Activated CD4-positive, alpha-beta T cell treated with anti-CD3 and anti-CD28 coated beads, Interleukin-2, amount 10 ng/mL, durations not matched to agents 7 days and 5 days (primary cell): ENCODE measurements at regions of chr19 and their contacts with region 1.

Region 1: GRCh38 chr19:50341091-50341564 is 12.0 kb upstream of the KCNC3 start:
- DNase-seq: no peak
- H3K4me3 Mint-ChIP-seq: no peak overlapping the region
- H3K27ac Mint-ChIP-seq: no peak overlapping the region
- H3K4me1 Mint-ChIP-seq: peaks cover 12% of the 10 kb centered on the region
- H3K27me3 Mint-ChIP-seq: no peaks in the 10 kb centered on the region

Region 2: GRCh38 chr19:50252111-50252886 is 88.8 kb before region 1 on chr19:
- CTCF ChIA-PET with region 1: no interaction called
- POLR2A ChIA-PET with region 1: no interaction called
- DNase-seq: peak; percentile 23
- H3K4me3 Mint-ChIP-seq: no peak overlapping the region
- H3K27ac Mint-ChIP-seq: no peak overlapping the region
- H3K4me1 Mint-ChIP-seq: no peaks in the 10 kb centered on the region
- H3K27me3 Mint-ChIP-seq: no peaks in the 10 kb centered on the region

Region 3: DNA sequence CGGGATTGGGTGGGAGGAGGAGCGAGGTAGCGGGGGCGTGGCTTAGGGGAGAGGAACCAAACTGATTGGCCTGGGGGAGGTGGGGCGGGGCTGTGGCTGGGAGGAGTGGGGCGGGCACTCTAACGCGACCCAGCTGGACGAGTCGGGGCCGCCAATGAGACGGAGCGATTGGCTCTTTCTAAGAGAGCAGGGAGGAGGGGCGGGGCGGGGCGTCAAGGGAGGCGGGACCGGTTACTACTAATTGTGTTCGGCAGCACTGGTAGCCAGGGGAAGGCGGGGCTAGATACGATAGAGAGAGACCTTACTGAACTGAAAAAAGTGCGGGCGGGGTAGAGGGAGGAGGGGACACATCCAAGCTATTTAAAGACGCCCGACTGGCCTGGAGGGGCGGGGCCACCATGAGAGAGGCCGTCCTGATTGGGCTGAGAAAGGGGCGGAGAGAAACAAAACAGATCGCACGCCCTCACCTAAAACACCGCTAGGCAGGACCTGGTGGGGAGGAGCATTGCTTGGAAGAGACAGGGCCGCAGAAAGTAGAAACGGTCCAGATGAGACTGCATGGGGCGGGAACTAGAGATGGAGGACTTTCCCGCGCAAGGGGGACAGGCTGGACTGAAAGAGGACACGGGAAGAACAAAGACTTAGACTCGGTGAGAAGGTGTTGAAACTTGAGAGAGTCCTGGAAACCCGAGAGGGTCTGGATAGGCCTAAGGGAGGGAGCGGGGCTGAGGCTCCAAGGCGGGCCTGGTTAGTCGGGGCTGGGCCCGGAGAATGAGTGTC is 11.8 kb before region 1 on chr19 and contains the start of gene KCNC3:
- CTCF ChIA-PET with region 1: interaction called, 12 read pairs
- POLR2A ChIA-PET with region 1: no interaction called
- DNase-seq: peak; percentile 98
- H3K4me3 Mint-ChIP-seq: peak within 1 kb of the TSS; percentile 83
- H3K27ac Mint-ChIP-seq: peak within 1 kb of the TSS; percentile 89
- H3K4me1 Mint-ChIP-seq: peaks cover 69% of the 10 kb centered on the region
- H3K27me3 Mint-ChIP-seq: peaks cover 23% of the 10 kb centered on the region
- total RNA-seq, gene KCNC3: 3.4 to 4.1 TPM